CD14-positive monocyte (primary cell): ENCODE measurements at regions of chr18 and their contacts with region 1.

Region 1: GRCh38 chr18:13471971-13472628 is 253.5 kb downstream of the LDLRAD4 start:
- DNase-seq: no peak
- H3K4me3 ChIP-seq: no peak overlapping the region
- H3K4me3 Mint-ChIP-seq: no peak overlapping the region
- H3K27ac ChIP-seq: peak overlapping the region; percentile 25 to 32
- H3K27ac Mint-ChIP-seq: peak overlapping the region in 3 of 7 donors; percentile 23 to 75 (median 42)
- H3K4me1 ChIP-seq: peaks cover 23 to 24% of the 10 kb centered on the region in 2 donors
- H3K4me1 Mint-ChIP-seq: peaks cover 41% of the 10 kb centered on the region
- H3K27me3 ChIP-seq: no peaks in the 10 kb centered on the region
- H3K27me3 Mint-ChIP-seq: peaks cover 0 to 2% (median 0%) of the 10 kb centered on the region in 3 donors
- CTCF ChIP-seq: no peak

Region 2: GRCh38 chr18:13406049-13406615 is 66.0 kb before region 1 on chr18:
- intact Hi-C with region 1: no loop called
- DNase-seq: no peak
- H3K4me3 ChIP-seq: no peak overlapping the region
- H3K4me3 Mint-ChIP-seq: no peak overlapping the region
- H3K27ac ChIP-seq: no peak overlapping the region
- H3K27ac Mint-ChIP-seq: peak overlapping the region in 1 of 7 donors; percentile 46
- H3K4me1 ChIP-seq: no peaks in the 10 kb centered on the region
- H3K4me1 Mint-ChIP-seq: no peaks in the 10 kb centered on the region
- H3K27me3 ChIP-seq: no peaks in the 10 kb centered on the region
- H3K27me3 Mint-ChIP-seq: peaks cover 0 to 1% (median 0%) of the 10 kb centered on the region in 3 donors
- CTCF ChIP-seq: no peak

Region 3: DNA sequence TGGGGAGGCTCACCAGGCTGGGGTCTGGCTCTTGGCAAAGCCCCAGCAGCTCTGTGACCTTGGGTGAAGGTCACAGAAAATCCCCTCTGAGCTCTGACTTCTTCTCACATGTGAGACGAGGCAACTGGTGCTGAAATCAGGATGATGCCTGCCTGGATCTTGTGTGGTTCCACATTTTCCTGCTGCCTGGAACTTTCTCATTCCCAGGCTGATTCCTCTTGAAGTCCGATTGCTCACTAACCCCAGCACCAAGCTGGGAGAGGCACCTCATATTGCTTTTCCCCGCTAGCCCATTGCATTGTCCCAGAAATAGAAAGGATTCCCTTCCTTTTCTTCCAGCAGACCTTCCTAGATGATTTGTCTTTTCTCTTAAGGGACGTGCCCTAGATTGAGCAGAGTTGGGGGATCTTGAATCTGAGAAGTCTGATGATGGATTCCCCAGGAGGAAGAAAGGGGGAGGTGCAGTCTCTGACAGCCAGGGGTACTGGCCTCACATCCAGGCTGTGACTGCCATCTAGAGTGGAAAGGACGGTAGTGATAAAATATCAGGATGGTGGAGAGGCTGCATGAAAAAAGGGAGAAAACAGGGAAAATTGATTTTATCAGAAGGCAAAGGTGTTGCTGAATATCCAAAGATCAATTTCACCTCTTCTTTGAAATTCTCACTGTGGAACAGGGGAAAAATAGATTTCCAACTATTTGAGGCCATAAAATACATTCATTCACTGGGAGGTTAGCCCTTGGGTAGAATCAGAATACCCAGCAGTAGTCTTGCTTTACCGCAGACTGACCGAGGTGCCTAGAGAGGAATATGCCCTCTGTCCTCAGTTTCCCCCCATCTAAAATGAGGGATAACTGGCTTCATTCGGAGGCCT is 158.0 kb after region 1 on chr18:
- intact Hi-C with region 1: loop called in 1 of 2 experiments (anchors 10 kb)
- DNase-seq: peak; percentile 54 to 70 (median 60)
- H3K4me3 ChIP-seq: no peak overlapping the region
- H3K4me3 Mint-ChIP-seq: no peak overlapping the region
- H3K27ac ChIP-seq: no peak overlapping the region
- H3K27ac Mint-ChIP-seq: peak overlapping the region in 6 of 7 donors; percentile 1 to 53 (median 42)
- H3K4me1 ChIP-seq: peaks cover 0 to 4% of the 10 kb centered on the region in 2 donors
- H3K4me1 Mint-ChIP-seq: peaks cover 6% of the 10 kb centered on the region
- H3K27me3 ChIP-seq: no peaks in the 10 kb centered on the region
- H3K27me3 Mint-ChIP-seq: peaks cover 0 to 4% (median 3%) of the 10 kb centered on the region in 3 donors
- CTCF ChIP-seq: peak; percentile 84